ENCODE measurements at regions of chr14 and their contacts with region 1.

Region 1: GRCh38 chr14:70955543-70956480 is 48.6 kb downstream of the PCNX1 start:
- DNase-seq: peak; percentile 64
- H3K4me3 ChIP-seq: no peak overlapping the region
- H3K27ac ChIP-seq: no peak overlapping the region
- H3K4me1 ChIP-seq: peaks cover 6% of the 10 kb centered on the region; the same call in 1 of the 2 replicates
- H3K27me3 ChIP-seq: no peaks in the 10 kb centered on the region

Region 2: GRCh38 chr14:70350078-70350477 is 605.7 kb before region 1 on chr14:
- in situ Hi-C with region 1: no loop called
- DNase-seq: no peak
- H3K4me3 ChIP-seq: no peak overlapping the region
- H3K27ac ChIP-seq: no peak overlapping the region
- H3K4me1 ChIP-seq: peaks cover 1% of the 10 kb centered on the region; the same call in 1 of the 2 replicates
- H3K27me3 ChIP-seq: no peaks in the 10 kb centered on the region

Region 3: DNA sequence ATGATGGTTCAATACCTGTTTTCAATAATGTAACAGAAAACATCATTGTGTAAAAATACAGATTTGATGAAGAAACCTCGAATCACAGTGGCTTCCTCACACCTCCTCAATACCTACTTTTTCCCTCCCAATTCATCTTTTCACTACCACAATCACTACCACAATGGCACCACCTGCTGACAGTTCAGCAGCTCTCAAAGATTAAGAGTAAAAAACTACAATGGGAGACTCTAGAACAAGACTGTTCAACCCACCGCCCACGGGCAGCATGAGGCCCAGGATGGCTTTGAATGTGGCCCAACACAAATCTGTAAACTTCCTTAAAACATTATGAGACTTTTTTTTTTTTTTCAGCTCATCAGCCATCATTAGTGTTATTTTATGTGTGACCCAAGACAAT is 370.6 kb before region 1 on chr14:
- in situ Hi-C with region 1: no loop called
- DNase-seq: peak; percentile 10
- H3K4me3 ChIP-seq: no peak overlapping the region
- H3K27ac ChIP-seq: no peak overlapping the region
- H3K4me1 ChIP-seq: no peaks in the 10 kb centered on the region
- H3K27me3 ChIP-seq: no peaks in the 10 kb centered on the region

Region 4: DNA sequence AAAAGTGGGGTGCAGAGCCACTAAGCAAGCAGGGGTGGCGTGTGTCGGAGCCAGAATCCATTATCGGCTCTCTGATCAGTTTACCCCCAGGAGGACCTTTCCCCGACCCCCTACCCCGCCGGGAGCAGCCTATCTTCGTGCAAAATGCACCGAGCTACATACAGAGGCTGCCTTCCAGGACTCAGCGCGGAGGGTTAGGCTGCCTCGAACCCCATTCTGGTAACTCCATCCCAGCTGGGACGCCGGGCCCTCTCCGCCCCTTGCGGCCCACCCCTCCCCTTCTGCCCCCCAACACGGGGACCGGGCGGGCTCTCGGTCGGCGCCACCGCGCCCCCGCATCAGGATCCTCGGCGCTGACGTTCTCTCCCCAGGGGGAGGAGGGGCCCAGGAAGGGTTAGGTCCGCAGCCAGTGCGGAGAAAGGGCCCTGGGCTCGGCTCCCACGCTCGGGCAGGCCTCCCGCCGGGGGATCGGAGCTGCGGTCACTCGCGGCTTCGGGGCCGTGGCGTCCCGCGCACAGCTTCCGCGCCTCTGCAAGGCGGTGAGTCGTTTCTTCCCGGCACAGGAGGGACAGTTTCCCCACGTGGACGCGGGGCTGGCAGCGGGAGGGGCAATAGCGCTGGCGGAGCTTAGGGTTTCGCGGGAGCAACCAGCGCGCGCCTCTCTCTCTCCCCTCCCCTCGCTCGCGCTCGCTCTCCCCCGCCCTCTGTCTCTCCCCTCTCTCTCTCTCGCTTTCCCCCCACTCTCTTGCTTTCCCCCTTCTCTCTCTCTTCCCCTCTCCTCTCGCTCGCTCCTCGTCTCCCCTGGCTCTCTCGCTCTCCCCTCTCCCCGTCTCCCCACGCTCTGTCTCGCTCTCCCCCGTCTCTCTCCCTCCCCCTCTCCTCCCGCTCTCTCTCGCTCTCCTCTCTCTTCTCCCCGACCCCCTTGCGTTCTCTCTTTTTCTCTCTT is 134.0 kb before region 1 on chr14:
- in situ Hi-C with region 1: loop called (anchors 10 kb)
- DNase-seq: peak; percentile 87
- H3K4me3 ChIP-seq: peak overlapping the region; percentile 73
- H3K27ac ChIP-seq: no peak overlapping the region
- H3K4me1 ChIP-seq: no peaks in the 10 kb centered on the region; the same call in 1 of the 2 replicates
- H3K27me3 ChIP-seq: no peaks in the 10 kb centered on the region